CD4-positive, alpha-beta T cell (primary cell): ENCODE measurements at regions of chr18 and their contacts with region 1.

Region 1: DNA sequence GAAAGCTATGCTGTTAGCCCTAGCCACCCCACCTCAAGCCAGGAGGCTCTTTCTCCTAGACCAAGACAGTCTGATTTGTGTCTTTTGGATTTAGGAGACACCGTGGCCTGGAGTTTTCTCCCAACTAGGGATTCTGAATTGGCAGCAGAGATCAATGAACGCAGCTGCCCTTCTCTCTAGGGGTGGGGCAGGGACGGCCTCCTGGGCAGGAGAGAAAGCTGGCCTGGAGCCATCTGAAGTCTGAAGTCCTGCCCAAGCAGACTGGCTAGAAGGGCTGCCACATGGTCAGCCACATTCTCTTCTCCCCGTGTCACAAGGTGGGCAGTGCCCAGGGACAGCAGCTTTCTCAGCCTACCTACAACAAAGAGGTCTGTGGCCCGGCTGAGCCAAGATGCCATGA is 45.1 kb downstream of the PIEZO2 start:
- DNase-seq: no peak
- ATAC-seq: no peak
- H3K4me3 ChIP-seq: no peak overlapping the region
- H3K4me3 Mint-ChIP-seq: no peak overlapping the region
- H3K27ac ChIP-seq: no peak overlapping the region
- H3K27ac Mint-ChIP-seq: no peak overlapping the region
- H3K4me1 ChIP-seq: no peaks in the 10 kb centered on the region
- H3K4me1 Mint-ChIP-seq: no peaks in the 10 kb centered on the region
- H3K27me3 ChIP-seq: no peaks in the 10 kb centered on the region
- H3K27me3 Mint-ChIP-seq: no peaks in the 10 kb centered on the region
- CTCF ChIP-seq: no peak

Region 2: DNA sequence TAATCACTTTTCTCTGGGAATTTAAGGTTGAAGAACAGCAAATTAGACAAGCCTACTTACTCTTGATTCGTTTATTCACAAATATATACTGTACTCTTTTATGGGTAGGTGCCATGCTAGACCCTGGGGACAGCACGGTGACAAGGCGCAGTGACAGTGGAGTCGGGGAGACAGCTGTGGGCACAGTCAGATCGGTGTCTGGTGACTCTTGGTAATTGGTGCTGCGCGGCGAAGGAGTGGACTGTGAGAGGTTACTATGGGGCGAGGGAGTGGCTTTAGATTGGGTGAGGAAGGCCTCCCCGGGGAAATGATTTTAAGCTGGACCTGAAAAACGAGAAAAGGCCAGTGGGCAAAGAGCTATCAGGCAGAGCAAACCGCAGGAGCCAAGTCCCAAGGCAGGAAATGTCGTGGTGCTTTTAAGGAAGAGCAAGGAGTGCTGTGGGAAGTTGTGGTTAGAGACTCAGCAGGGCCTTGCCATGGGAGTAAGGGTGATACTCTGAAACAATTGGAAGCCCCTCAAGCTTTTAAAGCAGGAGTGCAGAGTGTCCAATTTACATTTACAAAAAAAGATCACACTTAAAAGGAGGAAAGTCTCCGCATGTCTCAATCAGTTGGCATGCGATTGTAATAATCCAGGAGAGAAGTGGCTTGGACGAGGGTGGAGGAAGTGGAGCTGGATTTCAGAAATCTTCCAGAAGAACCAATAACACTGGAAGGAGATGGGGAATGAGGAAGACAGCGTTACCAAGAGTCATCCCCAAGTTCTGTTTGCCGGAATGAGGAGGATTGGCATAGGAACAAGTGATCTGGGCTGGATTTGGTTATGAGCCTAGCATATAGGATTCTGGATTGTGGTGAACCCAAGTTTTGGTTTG is 1254.7 kb before region 1 on chr18:
- CTCF ChIA-PET with region 1: no interaction called
- POLR2A ChIA-PET with region 1: no interaction called
- intact Hi-C with region 1: loop called in 1 of 2 experiments (anchors 10 kb)
- DNase-seq: peak in 2 of 14 experiments; percentile 39 to 67
- ATAC-seq: no peak
- H3K4me3 ChIP-seq: no peak overlapping the region
- H3K4me3 Mint-ChIP-seq: no peak overlapping the region
- H3K27ac ChIP-seq: no peak overlapping the region
- H3K27ac Mint-ChIP-seq: no peak overlapping the region
- H3K4me1 ChIP-seq: no peaks in the 10 kb centered on the region
- H3K4me1 Mint-ChIP-seq: no peaks in the 10 kb centered on the region
- H3K27me3 ChIP-seq: peaks cover 5 to 20% of the 10 kb centered on the region in 2 experiments
- H3K27me3 Mint-ChIP-seq: peaks cover 25% of the 10 kb centered on the region
- CTCF ChIP-seq: no peak

Region 3: DNA sequence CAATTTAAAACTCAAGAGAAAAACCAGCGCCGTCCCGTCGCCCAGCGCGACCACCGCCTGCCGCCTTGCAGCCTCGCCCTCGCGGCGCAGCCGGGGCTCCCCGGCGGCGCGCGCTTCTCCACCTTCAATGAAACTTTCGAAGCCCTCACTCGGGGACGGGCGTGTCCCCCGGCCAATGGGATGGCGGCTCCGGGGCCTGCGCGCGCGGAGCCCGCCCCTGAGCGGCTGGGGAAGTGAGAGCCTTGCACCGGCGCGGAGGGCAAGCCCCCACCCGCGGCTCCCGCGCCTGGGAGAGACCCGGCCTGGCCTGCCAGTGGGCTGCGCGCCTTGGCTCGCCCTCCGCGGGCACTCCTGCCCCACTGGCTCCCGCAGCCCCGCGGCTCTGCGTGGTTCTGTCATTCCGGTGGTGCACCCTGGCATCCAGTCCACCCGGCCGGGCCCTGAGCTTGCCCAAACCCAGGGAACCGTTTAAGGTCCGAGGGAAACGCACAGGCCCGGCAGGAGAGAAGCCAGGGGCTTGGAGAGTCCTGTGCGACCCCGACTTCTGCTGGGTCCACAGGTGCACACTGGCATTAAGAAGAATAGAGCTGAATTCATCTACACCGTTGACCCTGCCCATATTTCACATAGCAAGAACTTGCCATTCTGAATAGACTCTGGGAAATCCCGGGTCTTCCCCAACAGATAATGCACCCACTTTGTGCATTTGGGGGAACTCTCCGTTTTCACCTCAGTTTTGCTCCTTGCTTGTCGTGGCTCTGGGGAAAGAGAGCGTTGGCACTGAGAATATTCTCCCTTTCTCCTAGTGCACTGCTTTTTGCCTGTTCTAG is 45.3 kb after region 1 on chr18 and contains the start of gene PIEZO2:
- CTCF ChIA-PET with region 1: no interaction called
- POLR2A ChIA-PET with region 1: no interaction called
- intact Hi-C with region 1: no loop called
- DNase-seq: peak in 3 of 14 experiments; percentile 3 to 32 (median 19)
- ATAC-seq: no peak
- H3K4me3 ChIP-seq: no peak within 1 kb of the TSS
- H3K4me3 Mint-ChIP-seq: no peak within 1 kb of the TSS
- H3K27ac ChIP-seq: no peak within 1 kb of the TSS
- H3K27ac Mint-ChIP-seq: no peak within 1 kb of the TSS
- H3K4me1 ChIP-seq: no peaks in the 10 kb centered on the region
- H3K4me1 Mint-ChIP-seq: no peaks in the 10 kb centered on the region
- H3K27me3 ChIP-seq: peaks cover 16 to 35% of the 10 kb centered on the region in 2 experiments
- H3K27me3 Mint-ChIP-seq: peaks cover 72% of the 10 kb centered on the region
- CTCF ChIP-seq: no peak
- total RNA-seq, gene PIEZO2: not detected

Region 4: DNA sequence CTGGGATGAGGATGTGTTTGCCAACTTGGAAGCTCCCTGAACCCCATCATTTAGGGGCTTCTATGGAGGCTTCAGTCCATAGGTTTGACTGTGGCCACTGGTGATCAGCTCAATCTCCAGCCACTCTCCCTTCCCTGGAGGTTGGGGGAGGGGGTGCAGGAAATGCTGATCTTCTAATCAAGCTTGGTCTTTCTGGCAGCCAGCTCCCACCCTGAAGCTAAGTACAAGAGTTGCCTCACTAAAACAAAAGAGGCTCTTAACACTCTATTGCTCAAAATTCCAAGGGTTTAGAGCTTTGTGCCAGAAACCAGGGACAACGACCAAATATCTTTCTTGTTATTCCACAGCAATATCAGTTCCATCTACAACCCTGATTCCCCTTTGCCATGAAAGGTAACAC is 823.2 kb after region 1 on chr18:
- CTCF ChIA-PET with region 1: no interaction called
- POLR2A ChIA-PET with region 1: no interaction called
- intact Hi-C with region 1: no loop called
- DNase-seq: no peak
- ATAC-seq: no peak
- H3K4me3 ChIP-seq: no peak overlapping the region
- H3K4me3 Mint-ChIP-seq: no peak overlapping the region
- H3K27ac ChIP-seq: no peak overlapping the region
- H3K27ac Mint-ChIP-seq: no peak overlapping the region
- H3K4me1 ChIP-seq: no peaks in the 10 kb centered on the region
- H3K4me1 Mint-ChIP-seq: no peaks in the 10 kb centered on the region
- H3K27me3 ChIP-seq: peaks cover 0 to 3% of the 10 kb centered on the region in 2 experiments
- H3K27me3 Mint-ChIP-seq: no peaks in the 10 kb centered on the region
- CTCF ChIP-seq: no peak